Panc1 (cell line): ENCODE measurements at regions of chr11 and their contacts with region 1.

Region 1: DNA sequence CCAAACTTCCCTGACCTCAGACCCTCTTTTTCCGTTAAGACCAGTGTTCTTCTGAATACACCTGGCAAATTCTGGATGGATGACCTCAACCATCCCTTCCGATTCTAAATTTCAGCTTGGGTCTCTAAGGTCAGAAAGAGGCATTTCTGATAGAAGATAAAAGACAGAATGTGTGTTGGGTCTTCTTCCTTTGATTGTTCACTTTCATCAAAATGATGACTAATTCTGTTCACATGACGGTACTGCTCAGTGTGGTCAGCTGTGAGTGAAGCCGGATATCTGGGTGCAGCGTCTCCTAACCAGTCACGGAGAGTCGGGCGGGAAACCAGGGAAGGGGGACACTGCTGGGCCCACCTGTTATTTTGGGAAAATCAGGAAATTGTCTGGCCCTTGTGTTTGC is 151.6 kb upstream of the NAV2 start:
- DNase-seq: no peak
- ATAC-seq: no peak
- H3K4me3 ChIP-seq: no peak overlapping the region
- H3K27ac ChIP-seq: no peak overlapping the region
- H3K4me1 ChIP-seq: 0 out of 2 replicates have a peak, but pooled peaks cover 3% of the 10 kb centered on the region
- H3K27me3 ChIP-seq: peaks cover 9% of the 10 kb centered on the region; the same call in 1 of the 2 replicates
- CTCF ChIP-seq: no peak

Region 2: DNA sequence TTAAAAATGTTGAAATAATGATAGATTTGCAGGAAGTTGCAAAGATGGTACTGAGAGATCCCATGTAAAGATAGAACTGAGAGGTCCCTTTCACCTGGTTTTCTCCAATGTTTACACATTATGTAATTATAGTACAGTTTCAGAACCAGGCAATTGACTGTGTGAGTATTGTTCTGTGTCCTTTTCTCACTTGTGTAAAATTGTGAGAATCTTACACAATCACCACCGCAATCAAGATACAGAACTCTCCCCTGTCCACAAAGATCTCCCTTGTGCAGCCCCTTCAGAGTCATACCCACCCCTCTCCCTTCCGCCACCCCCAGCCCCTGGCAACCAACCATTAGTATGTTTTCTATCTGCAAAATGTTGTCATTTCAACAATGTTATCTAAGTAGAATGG is 31.8 kb after region 1 on chr11:
- CTCF ChIA-PET with region 1: interaction called, 5 read pairs
- POLR2A ChIA-PET with region 1: interaction called, 13 read pairs
- in situ Hi-C with region 1: no loop called
- intact Hi-C with region 1: no loop called
- DNase-seq: no peak
- ATAC-seq: no peak
- H3K4me3 ChIP-seq: no peak overlapping the region
- H3K27ac ChIP-seq: no peak overlapping the region
- H3K4me1 ChIP-seq: no peaks in the 10 kb centered on the region
- H3K27me3 ChIP-seq: no peaks in the 10 kb centered on the region; the same call in 1 of the 2 replicates
- CTCF ChIP-seq: no peak

Region 3: DNA sequence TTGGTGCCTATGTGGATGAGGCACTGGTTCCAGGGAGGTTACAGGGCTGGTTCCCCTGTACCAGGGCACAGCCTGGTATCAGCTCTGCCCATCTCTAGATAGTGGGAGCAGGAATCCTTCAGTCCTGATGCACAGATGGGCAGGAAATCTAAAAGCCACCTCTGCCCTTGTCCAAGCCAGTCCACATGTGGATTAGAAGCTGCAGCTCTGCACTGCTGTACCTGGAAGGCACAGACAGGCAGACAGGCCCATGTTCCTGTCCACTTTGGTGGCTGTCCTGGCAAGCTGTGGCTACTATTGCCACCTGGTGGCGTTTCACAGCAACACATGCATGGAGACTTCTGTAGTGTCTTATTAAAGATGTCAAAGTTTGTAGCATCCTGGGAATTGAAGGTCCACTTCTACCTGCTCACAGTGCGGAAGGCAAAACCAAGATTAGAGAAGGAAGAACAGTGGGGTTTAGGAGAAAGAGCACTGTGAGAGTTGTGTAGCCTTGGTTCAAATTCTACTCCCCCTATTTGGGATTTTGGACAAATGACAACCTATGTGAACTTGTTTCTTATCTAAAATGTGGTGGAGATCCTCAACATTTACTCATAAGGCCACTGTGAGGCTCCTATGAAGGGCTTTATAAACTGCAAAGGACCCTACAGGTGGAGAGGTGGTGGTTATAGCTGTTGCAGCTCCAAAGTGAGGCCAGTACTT is 181.7 kb after region 1 on chr11:
- CTCF ChIA-PET with region 1: interaction called, 13 read pairs
- POLR2A ChIA-PET with region 1: no interaction called
- in situ Hi-C with region 1: no loop called
- intact Hi-C with region 1: loop called (anchors 1 kb)
- DNase-seq: peak; percentile 46
- ATAC-seq: peak; percentile 93
- H3K4me3 ChIP-seq: no peak overlapping the region
- H3K27ac ChIP-seq: no peak overlapping the region
- H3K4me1 ChIP-seq: no peaks in the 10 kb centered on the region
- H3K27me3 ChIP-seq: no peaks in the 10 kb centered on the region
- CTCF ChIP-seq: peak; percentile 86

Region 4: DNA sequence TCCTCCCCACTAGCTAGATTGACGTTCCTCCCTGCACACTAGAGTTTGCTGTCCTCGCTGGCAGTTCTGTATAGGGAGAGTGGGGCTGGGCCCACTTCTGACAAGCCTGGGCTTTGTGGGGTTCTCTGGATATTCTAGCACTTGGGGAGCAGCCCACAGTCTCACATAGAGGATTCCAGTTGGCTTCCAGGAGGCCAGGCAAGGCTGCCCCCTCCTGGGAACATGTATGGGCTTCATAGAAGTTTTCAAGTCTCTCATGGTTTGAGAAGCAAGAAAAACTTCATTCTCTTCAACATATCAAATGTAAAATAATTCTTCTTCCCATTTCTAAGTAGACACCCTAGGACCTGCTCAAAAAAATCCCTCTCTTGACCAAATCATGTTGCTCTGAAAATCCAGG is 239.2 kb after region 1 on chr11:
- CTCF ChIA-PET with region 1: interaction called, 3 read pairs
- POLR2A ChIA-PET with region 1: no interaction called
- in situ Hi-C with region 1: no loop called
- intact Hi-C with region 1: loop called (anchors 10 kb)
- DNase-seq: no peak
- ATAC-seq: no peak
- H3K4me3 ChIP-seq: no peak overlapping the region
- H3K27ac ChIP-seq: no peak overlapping the region
- H3K4me1 ChIP-seq: 0 out of 2 replicates have a peak, but pooled peaks cover 3% of the 10 kb centered on the region
- H3K27me3 ChIP-seq: no peaks in the 10 kb centered on the region
- CTCF ChIP-seq: peak; percentile 43; the same call in 1 of the 2 replicates

Region 5: DNA sequence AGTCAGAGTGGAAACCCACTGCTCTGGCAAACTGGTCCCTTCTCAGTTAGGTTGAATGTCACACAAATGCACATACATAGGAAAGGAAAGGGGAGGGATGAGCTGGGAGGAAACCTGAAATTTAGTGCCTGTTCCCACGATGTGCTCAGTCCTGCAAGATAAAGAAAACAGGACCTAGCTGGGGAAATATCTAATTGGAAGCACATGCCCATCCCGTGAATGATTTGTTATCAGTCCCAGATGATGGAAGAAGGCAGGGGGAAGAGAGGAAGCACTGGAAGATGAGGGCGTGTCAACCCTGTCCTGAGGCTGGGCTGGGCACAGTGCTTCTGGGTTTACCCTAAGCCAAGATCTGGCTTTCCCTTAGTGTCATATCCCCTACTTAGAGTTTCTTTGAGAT is 325.5 kb after region 1 on chr11:
- CTCF ChIA-PET with region 1: interaction called, 13 read pairs
- POLR2A ChIA-PET with region 1: no interaction called
- in situ Hi-C with region 1: no loop called
- intact Hi-C with region 1: no loop called
- DNase-seq: no peak
- ATAC-seq: no peak
- H3K4me3 ChIP-seq: no peak overlapping the region
- H3K27ac ChIP-seq: no peak overlapping the region
- H3K4me1 ChIP-seq: no peaks in the 10 kb centered on the region
- H3K27me3 ChIP-seq: no peaks in the 10 kb centered on the region
- CTCF ChIP-seq: no peak

Region 6: DNA sequence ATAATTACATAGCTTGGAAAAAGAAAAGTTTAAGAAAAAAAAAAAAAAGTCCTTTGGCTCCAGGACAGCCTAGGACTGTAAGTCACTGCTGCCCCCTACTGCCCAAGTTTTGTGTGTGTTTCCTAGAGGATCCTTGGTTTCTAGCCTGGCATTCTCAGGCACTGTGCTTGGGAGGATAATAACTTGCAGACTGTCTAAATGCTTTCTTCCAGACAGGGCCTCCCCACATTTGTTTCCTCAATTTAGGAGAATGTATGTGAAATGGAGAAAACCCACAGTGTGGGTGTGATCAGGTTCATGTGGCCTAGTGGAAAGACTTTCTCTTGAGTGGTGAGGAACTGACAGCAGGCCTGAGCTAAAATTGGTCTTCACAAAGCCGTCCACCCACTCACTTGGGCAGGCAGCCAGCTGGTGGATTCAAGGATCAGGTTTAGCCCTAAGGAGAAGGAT is 342.6 kb after region 1 on chr11:
- CTCF ChIA-PET with region 1: interaction called, 5 read pairs
- POLR2A ChIA-PET with region 1: no interaction called
- in situ Hi-C with region 1: no loop called
- intact Hi-C with region 1: loop called (anchors 2 kb)
- DNase-seq: peak; percentile 39
- ATAC-seq: peak; percentile 92
- H3K4me3 ChIP-seq: no peak overlapping the region
- H3K27ac ChIP-seq: no peak overlapping the region
- H3K4me1 ChIP-seq: no peaks in the 10 kb centered on the region
- H3K27me3 ChIP-seq: no peaks in the 10 kb centered on the region
- CTCF ChIP-seq: peak; percentile 88